ENCODE measurements at regions of chr10 and their contacts with region 1.

Region 1: DNA sequence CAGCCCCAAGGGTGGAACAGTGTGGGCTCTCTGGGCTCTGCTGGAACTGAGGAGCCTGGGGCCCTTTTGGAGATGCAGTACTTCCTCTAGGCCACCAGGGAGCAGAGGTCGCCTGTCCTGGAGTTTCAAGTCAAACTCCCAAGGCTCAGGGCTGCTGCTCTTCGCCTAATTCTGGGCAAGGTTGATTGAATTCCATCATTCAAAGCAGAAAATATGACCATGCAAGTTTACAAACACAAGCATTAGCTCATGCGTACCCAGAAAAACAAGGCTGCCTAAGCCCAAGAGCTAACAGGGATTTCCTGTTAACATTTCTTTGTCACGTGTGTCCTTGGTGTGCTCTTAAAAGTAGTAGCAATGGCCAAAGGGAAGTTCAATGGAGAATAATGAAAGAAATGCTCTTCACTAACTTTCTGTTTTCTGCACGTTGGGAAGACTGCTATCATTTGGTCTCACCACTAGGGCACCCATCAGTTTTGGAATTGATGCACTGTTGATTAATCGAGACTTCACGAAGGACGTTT is 20.1 kb downstream of the LDB3 start:
- DNase-seq: peak; percentile 54 to 68
- H3K4me3 ChIP-seq: no peak overlapping the region
- H3K27ac ChIP-seq: no peak overlapping the region
- H3K4me1 ChIP-seq: peaks cover 3 to 23% (median 9%) of the 10 kb centered on the region in 4 experiments; a peak in 6 of 7 replicates
- H3K27me3 ChIP-seq: no peaks in the 10 kb centered on the region
- CTCF ChIP-seq: peak; percentile 81 to 92 (median 87)
- EP300 ChIP-seq: no peak
- POLR2A ChIP-seq: no peak
- RAD21 ChIP-seq: peak; percentile 96 to 99

Region 2: DNA sequence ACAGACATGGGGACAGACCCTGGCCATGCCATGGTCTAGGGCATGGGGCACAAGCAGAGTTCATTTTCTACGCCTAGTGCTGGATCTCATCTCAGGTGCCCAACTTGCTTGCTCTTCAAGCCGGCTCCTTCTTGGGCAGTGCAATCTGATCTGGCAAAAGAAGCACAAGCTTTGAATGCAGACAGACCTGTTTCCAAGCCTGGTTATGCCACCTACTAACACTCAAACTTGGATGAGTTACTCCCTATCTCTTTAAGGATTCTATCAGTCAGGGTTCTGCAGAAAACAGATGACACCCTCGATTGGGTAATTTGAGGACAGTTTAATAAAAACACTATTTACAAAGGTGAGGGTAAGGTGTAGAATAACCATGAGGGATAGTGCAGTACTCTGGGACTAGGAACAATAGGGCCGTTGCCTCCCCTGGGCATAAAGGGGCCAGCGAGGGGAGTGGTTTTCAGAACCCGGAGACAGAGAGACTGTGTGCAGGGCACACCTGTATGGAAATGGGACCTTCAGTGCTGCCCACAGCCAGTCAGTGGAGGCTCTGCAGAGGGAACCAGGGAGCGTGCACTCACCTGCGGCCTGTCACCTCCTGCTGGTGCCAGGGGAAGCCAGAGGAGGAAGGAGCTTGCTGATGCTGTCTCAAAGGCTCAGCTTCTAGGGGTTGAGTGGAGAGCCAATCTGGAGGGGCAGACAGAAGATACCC is 131.7 kb before region 1 on chr10:
- CTCF ChIA-PET with region 1: no interaction called
- POLR2A ChIA-PET with region 1: no interaction called
- DNase-seq: no peak
- H3K4me3 ChIP-seq: no peak overlapping the region
- H3K27ac ChIP-seq: no peak overlapping the region
- H3K4me1 ChIP-seq: peaks cover 0 to 6% (median 4%) of the 10 kb centered on the region in 4 experiments; a peak in 5 of 7 replicates
- H3K27me3 ChIP-seq: no peaks in the 10 kb centered on the region
- CTCF ChIP-seq: no peak
- EP300 ChIP-seq: no peak
- POLR2A ChIP-seq: no peak
- RAD21 ChIP-seq: no peak

Region 3: GRCh38 chr10:86668297-86669165 is 19.9 kb before region 1 on chr10 and contains the start of gene LDB3:
- CTCF ChIA-PET with region 1: interaction called, 105 read pairs
- POLR2A ChIA-PET with region 1: interaction called, 5 read pairs
- DNase-seq: no peak
- H3K4me3 ChIP-seq: no peak within 1 kb of the TSS
- H3K27ac ChIP-seq: no peak within 1 kb of the TSS
- H3K4me1 ChIP-seq: peaks cover 3 to 30% (median 21%) of the 10 kb centered on the region in 4 experiments
- H3K27me3 ChIP-seq: no peaks in the 10 kb centered on the region
- CTCF ChIP-seq: no peak
- EP300 ChIP-seq: no peak
- POLR2A ChIP-seq: no peak
- RAD21 ChIP-seq: no peak
- total RNA-seq, gene LDB3: 0.40 and 0.43 TPM in 2 replicates

Region 4: DNA sequence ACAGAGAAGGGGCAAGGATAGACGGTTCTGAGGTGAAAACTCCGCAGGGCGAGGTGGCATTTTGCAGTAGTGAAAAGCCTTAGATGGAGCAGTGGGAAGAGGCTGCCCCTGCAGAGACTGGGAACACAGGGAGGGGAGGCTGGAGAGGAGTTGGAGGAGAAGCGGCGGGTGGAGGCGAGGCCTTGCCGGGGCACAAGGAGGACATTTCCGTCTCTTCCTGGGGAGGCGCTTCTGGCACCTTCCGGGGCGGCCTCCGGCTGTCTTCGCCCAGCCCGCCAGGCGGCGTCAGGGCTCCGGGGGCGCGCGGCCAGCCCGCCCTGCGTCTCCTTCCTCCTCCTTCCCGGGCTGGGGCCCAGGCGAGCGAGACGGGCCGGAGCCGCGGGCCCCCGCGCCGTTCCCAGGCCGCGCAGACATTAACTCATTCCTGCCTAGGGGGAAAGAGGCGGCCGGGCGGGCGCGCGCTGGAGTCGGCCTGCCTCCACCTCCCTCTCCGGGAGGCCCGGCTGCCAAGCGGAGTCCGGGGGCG is 22.6 kb after region 1 on chr10:
- CTCF ChIA-PET with region 1: interaction called, 59 read pairs
- POLR2A ChIA-PET with region 1: interaction called, 4 read pairs
- DNase-seq: peak; percentile 68 to 92
- H3K4me3 ChIP-seq: peak overlapping the region; percentile 46 to 67 (median 54)
- H3K27ac ChIP-seq: no peak overlapping the region; the same call in 1 of the 2 replicates
- H3K4me1 ChIP-seq: peaks cover 3 to 28% (median 12%) of the 10 kb centered on the region in 4 experiments
- H3K27me3 ChIP-seq: no peaks in the 10 kb centered on the region
- CTCF ChIP-seq: peak; percentile 68 to 97 (median 80)
- EP300 ChIP-seq: no peak
- POLR2A ChIP-seq: peak in 1 of 2 experiments; percentile 64; a peak in 2 of 3 replicates
- RAD21 ChIP-seq: peak; percentile 72 to 80

Region 5: DNA sequence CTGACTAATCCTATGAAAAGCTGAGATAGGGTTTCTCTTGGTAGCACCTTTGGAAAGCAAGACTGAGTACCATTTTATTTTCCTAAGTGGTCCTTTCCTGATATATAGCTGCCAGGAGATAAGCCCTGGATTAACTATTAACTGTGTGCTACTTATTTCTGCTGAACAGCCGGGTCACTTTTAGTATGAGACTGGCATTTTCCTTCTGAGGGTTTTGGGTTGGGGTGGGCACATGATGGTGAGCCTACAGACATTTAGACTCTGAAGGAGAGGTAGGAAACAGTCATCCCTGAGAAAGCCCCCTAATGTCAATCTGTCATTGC is 38.2 kb after region 1 on chr10:
- CTCF ChIA-PET with region 1: no interaction called
- POLR2A ChIA-PET with region 1: no interaction called
- DNase-seq: no peak
- H3K4me3 ChIP-seq: no peak overlapping the region
- H3K27ac ChIP-seq: no peak overlapping the region
- H3K4me1 ChIP-seq: no peaks in the 10 kb centered on the region
- H3K27me3 ChIP-seq: no peaks in the 10 kb centered on the region
- CTCF ChIP-seq: no peak
- EP300 ChIP-seq: no peak
- POLR2A ChIP-seq: no peak
- RAD21 ChIP-seq: no peak

Region 6: DNA sequence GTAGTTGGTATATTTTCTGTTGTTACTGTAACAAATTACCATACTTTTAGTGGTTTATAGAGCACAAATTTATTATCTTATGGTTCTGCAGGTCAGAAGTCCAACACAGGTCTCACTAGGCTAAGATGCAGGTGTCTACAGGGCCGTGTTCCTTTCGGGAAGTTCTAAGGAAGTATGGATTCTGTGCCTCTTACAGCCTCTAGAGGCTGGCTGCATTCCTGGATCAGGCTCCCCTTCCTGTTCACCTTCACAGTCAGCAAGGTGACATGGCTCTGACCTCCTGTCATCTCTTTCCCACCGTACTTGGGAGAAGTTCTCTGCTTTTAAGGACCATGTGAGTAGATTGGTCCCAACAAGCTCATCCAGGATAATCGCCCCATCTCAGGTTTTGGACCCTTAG is 105.2 kb after region 1 on chr10:
- CTCF ChIA-PET with region 1: no interaction called
- POLR2A ChIA-PET with region 1: no interaction called
- DNase-seq: no peak
- H3K4me3 ChIP-seq: no peak overlapping the region
- H3K27ac ChIP-seq: no peak overlapping the region
- H3K4me1 ChIP-seq: peaks cover 0 to 13% (median 7%) of the 10 kb centered on the region in 4 experiments; a peak in 4 of 7 replicates
- H3K27me3 ChIP-seq: no peaks in the 10 kb centered on the region
- CTCF ChIP-seq: no peak
- EP300 ChIP-seq: no peak
- POLR2A ChIP-seq: no peak
- RAD21 ChIP-seq: no peak

Region 7: DNA sequence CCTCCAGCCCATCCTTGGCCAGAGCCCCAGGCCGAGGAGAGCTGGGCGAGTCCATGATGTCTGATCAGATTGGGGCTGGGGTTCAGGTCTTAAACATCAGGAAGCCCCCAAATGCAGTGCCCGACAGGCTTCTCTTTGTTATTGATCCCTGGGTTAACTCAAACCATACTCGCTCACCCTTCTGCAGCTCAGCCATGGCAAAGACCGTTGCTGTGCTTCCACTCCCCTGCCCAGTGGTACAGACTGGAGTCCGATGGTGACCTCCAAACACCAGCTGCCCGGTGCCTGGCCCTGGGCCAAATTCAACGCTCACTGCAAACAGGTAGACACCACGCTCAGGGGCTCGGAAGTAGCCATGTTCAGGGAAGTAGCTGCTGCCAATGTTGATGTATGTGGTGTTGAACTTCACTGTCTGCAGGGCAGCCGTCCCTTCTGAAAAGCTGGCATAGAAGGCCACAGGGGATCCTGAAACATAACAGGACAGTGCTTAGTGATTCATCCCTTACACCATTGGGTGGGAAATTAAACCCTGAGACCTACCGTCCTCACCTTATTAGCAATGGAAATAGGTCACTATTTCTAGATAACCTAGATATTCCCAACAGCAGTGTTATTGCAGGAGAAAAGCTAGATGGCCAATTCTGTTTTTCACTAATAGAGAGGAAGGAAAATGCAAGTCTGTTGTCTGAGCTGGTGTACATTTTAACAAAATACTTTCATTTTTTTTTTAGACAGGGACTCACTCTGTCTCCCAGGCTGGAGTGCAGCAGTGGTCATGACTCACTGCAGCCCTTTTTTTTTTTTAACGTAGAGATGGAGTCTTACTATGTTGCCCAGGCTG is 248.4 kb after region 1 on chr10:
- CTCF ChIA-PET with region 1: interaction called, 36 read pairs
- POLR2A ChIA-PET with region 1: no interaction called
- DNase-seq: no peak
- H3K4me3 ChIP-seq: no peak overlapping the region
- H3K27ac ChIP-seq: no peak overlapping the region
- H3K4me1 ChIP-seq: no peaks in the 10 kb centered on the region; a peak in 1 of 7 replicates
- H3K27me3 ChIP-seq: 0 out of 7 replicates have a peak, but pooled peaks cover 0 to 3% (median 0%) of the 10 kb centered on the region in 4 experiments
- CTCF ChIP-seq: no peak
- EP300 ChIP-seq: no peak
- POLR2A ChIP-seq: no peak
- RAD21 ChIP-seq: no peak

Region 8: GRCh38 chr10:86960003-86960862 is 271.8 kb after region 1 on chr10:
- CTCF ChIA-PET with region 1: interaction called, 25 read pairs
- POLR2A ChIA-PET with region 1: no interaction called
- DNase-seq: peak in 1 of 2 experiments; percentile 81
- H3K4me3 ChIP-seq: no peak overlapping the region
- H3K27ac ChIP-seq: no peak overlapping the region; the same call in 1 of the 2 replicates
- H3K4me1 ChIP-seq: peaks cover 15 to 47% (median 34%) of the 10 kb centered on the region in 4 experiments
- H3K27me3 ChIP-seq: no peaks in the 10 kb centered on the region
- CTCF ChIP-seq: peak in 2 of 3 experiments; percentile 96 to 100; a peak in 3 of 4 replicates
- EP300 ChIP-seq: no peak
- POLR2A ChIP-seq: no peak
- RAD21 ChIP-seq: peak; percentile 86 to 90